ENCODE measurements at regions of chr2 and their contacts with region 1.

Region 1: GRCh38 chr2:3423492-3424175 is 44.1 kb downstream of the TRAPPC12 start:
- DNase-seq: peak; percentile 83
- ATAC-seq: peak; percentile 92
- H3K4me3 Mint-ChIP-seq: no peak overlapping the region
- H3K27ac Mint-ChIP-seq: no peak overlapping the region
- H3K4me1 Mint-ChIP-seq: peaks cover 6% of the 10 kb centered on the region
- H3K27me3 Mint-ChIP-seq: no peaks in the 10 kb centered on the region
- CTCF ChIP-seq: peak; percentile 100

Region 2: GRCh38 chr2:3324404-3325281 is 99.0 kb before region 1 on chr2:
- CTCF ChIA-PET with region 1: no interaction called
- POLR2A ChIA-PET with region 1: no interaction called
- intact Hi-C with region 1: no loop called
- DNase-seq: no peak
- ATAC-seq: no peak
- H3K4me3 Mint-ChIP-seq: no peak overlapping the region
- H3K27ac Mint-ChIP-seq: no peak overlapping the region
- H3K4me1 Mint-ChIP-seq: no peaks in the 10 kb centered on the region
- H3K27me3 Mint-ChIP-seq: no peaks in the 10 kb centered on the region
- CTCF ChIP-seq: no peak

Region 3: GRCh38 chr2:3386448-3386958 is 37.1 kb before region 1 on chr2:
- CTCF ChIA-PET with region 1: interaction called, 28 read pairs
- POLR2A ChIA-PET with region 1: no interaction called
- intact Hi-C with region 1: no loop called
- DNase-seq: no peak
- ATAC-seq: no peak
- H3K4me3 Mint-ChIP-seq: no peak overlapping the region
- H3K27ac Mint-ChIP-seq: no peak overlapping the region
- H3K4me1 Mint-ChIP-seq: peaks cover 27% of the 10 kb centered on the region
- H3K27me3 Mint-ChIP-seq: no peaks in the 10 kb centered on the region
- CTCF ChIP-seq: no peak

Region 4: DNA sequence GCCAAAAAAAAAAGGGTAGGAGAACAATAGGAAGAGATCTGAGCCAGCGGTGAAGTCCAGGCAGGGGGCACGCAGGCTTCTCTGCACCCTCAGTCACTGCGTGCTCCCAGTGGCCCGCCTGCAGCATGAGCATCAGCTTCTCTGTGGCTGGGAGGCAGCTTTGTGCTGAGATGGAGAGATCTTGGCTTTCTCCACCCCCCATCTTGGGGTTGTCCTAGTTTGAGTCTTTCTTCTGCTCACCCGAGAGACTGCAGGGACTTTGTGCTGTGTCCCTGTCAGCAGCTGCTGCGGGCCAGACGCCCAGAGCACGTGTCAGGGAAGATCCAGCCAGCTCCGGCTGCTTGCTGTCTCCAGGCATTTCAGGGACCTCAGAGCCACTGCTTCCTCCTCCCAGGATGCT is 23.8 kb before region 1 on chr2:
- CTCF ChIA-PET with region 1: interaction called, 21 read pairs
- POLR2A ChIA-PET with region 1: no interaction called
- intact Hi-C with region 1: no loop called
- DNase-seq: no peak
- ATAC-seq: no peak
- H3K4me3 Mint-ChIP-seq: no peak overlapping the region
- H3K27ac Mint-ChIP-seq: no peak overlapping the region
- H3K4me1 Mint-ChIP-seq: peaks cover 9% of the 10 kb centered on the region
- H3K27me3 Mint-ChIP-seq: no peaks in the 10 kb centered on the region
- CTCF ChIP-seq: no peak

Region 5: DNA sequence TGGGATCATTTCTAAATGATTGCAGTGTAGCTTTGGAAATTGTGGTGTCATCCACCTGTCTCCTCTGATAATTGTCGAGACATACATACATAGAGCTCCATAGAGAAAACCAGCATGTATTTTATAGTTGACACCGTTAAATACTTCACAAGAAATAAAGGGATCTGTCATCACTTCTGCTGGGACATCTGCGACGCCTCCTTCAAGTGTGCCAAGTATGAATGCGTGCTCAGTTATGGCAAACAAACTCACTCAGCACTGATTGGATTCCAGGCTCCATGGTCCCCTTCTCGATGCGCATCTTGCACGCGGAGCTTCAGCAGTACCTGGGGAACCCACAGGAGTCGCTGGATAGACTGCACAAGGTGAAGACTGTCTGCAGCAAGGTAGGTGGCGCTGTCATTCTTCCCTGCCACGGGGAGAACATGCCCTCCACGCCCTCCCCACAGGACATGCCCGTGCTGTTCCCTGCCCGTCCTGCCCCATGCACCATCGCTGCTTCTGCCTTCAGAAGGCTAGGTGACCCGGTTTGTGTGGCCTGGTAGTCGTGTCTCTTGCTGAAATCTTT is 20.0 kb after region 1 on chr2:
- CTCF ChIA-PET with region 1: interaction called, 33 read pairs
- POLR2A ChIA-PET with region 1: no interaction called
- intact Hi-C with region 1: no loop called
- DNase-seq: no peak
- ATAC-seq: no peak
- H3K4me3 Mint-ChIP-seq: no peak overlapping the region
- H3K27ac Mint-ChIP-seq: no peak overlapping the region
- H3K4me1 Mint-ChIP-seq: peaks cover 16% of the 10 kb centered on the region
- H3K27me3 Mint-ChIP-seq: no peaks in the 10 kb centered on the region
- CTCF ChIP-seq: no peak

Region 6: GRCh38 chr2:3453190-3454014 is 29.8 kb after region 1 on chr2:
- CTCF ChIA-PET with region 1: interaction called, 10 read pairs
- POLR2A ChIA-PET with region 1: interaction called, 3 read pairs
- intact Hi-C with region 1: no loop called
- DNase-seq: no peak
- ATAC-seq: no peak
- H3K4me3 Mint-ChIP-seq: no peak overlapping the region
- H3K27ac Mint-ChIP-seq: no peak overlapping the region
- H3K4me1 Mint-ChIP-seq: no peaks in the 10 kb centered on the region
- H3K27me3 Mint-ChIP-seq: no peaks in the 10 kb centered on the region
- CTCF ChIP-seq: no peak

Region 7: DNA sequence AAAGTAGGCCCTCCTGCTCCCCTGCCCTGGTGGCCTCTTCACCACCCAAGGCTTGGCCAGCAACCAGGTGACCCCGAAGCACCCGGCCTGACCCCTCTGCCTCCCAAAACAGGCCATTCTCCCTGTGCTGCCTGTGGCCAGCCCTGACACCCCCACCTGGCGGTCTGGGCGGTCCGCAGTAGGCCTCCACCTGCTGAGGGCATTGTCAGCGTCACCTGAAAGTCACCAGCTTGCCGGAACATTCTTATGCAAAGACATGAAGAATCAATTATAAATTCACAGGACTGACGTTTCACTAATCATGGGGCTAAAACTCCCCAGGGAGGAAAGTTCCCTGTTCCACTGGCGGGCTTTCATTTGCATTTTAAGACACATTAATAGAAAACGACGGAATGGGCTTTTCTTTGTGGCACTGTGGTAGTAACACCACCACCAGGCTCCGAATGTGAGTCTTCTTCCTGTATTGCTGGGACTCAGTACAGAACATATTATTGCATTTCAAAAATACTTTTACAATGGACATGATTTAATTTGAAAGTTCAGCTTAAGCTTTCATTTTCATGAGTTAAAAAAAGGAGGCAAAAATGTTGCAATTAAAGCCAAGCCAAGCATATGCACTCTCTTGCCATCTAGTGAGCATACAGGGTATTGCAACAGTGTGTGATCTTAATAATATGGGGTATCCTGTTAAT is 38.3 kb after region 1 on chr2:
- CTCF ChIA-PET with region 1: interaction called, 34 read pairs
- POLR2A ChIA-PET with region 1: interaction called, 3 read pairs
- intact Hi-C with region 1: no loop called
- DNase-seq: peak; percentile 58
- ATAC-seq: peak; percentile 94
- H3K4me3 Mint-ChIP-seq: no peak overlapping the region
- H3K27ac Mint-ChIP-seq: peak overlapping the region; percentile 74
- H3K4me1 Mint-ChIP-seq: peaks cover 11% of the 10 kb centered on the region
- H3K27me3 Mint-ChIP-seq: no peaks in the 10 kb centered on the region
- CTCF ChIP-seq: peak; percentile 92

Region 8: DNA sequence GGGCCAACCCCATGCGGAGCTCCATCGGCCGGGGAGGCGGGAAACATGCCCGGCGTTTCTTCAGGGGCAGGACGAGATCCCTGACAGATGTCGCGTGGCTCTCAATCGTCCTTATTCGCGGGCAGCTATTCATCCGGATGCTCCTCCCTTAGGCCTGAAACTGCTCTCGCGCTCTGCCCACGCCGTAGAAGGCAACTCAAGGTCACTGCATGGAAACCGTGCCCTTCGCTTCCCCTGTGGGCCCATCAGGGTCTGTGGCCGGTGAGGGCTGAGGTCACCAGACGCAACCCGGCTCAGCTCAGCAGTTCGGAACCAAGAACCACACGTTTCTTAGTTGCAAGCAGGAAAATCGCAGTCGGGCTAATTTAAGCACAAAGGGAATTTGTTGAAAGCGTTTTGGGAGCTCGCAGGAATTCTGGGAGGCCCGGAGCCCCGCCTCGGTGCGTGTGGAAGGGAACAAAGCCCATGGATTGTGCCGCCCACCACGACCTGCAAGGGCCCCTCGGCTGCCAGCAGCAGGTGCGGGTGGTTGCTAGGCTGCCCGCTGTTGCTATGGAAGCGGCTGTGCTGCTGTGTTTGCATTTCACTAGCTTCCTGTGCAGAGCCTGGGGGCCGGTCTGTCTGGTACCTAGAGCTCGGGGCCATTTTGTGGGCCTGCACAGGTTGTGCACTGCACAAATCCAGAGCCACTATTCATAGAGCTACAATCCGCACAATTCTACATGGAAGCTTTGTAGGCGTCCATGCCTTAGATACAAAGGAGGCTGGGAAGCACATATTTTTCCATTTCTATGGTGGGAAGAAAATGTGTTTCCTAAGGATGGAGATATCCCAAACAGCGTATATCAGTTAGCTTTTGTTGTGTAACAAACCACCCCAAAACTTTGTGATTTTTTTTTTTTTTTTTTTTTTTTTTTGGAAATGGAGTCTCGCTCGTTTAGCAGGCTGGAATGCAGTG is 228.3 kb after region 1 on chr2:
- CTCF ChIA-PET with region 1: interaction called, 27 read pairs
- POLR2A ChIA-PET with region 1: no interaction called
- intact Hi-C with region 1: loop called (anchors 10 kb)
- DNase-seq: peak; percentile 90
- ATAC-seq: peak; percentile 79
- H3K4me3 Mint-ChIP-seq: peak overlapping the region; percentile 76
- H3K27ac Mint-ChIP-seq: peak overlapping the region; percentile 94
- H3K4me1 Mint-ChIP-seq: peaks cover 13% of the 10 kb centered on the region
- H3K27me3 Mint-ChIP-seq: no peaks in the 10 kb centered on the region
- CTCF ChIP-seq: no peak

Region 9: DNA sequence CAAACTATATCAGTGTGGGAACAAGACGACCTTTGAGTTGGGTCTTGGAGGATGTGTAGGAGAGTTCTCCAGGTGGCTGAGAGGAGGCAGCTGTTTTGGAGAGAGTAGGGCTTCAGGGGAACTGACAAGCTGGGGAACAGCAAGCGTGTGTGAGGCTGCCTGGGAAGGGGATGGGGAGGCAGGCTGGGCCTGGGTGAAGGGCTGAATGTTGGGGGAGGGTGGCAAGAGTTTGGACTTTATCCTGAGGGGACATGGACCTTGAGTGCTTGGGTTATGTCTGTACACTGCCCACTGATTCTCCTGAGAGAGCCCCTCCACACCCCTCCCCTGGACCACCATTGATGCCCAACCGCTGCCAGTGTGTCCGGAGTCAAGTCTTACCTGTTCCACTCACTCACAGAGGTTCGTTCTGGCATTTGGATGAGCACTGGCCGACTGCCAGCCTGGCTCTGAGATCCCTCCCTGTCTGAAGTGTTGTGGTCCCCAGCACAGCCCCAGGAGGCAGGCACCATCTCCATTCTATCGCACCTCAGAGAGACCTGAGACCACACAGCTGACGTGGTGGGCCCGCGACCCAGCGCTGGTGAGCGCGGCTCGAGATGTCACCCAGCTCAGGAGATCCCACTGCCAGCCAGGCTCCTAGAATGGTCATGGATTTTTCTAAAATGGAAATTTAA is 339.3 kb after region 1 on chr2:
- CTCF ChIA-PET with region 1: no interaction called
- POLR2A ChIA-PET with region 1: no interaction called
- intact Hi-C with region 1: no loop called
- DNase-seq: no peak
- ATAC-seq: no peak
- H3K4me3 Mint-ChIP-seq: no peak overlapping the region
- H3K27ac Mint-ChIP-seq: no peak overlapping the region
- H3K4me1 Mint-ChIP-seq: no peaks in the 10 kb centered on the region
- H3K27me3 Mint-ChIP-seq: peaks cover 4% of the 10 kb centered on the region
- CTCF ChIP-seq: no peak